GM12878 (cell line): ENCODE measurements at regions of chrX and their contacts with region 1.

Region 1: GRCh38 chrX:103175944-103176753 is 38.8 kb upstream of the BEX4 start:
- DNase-seq: no peak
- ATAC-seq: peak; percentile 81
- H3K4me3 ChIP-seq: no peak overlapping the region
- H3K27ac ChIP-seq: no peak overlapping the region
- H3K4me1 ChIP-seq: no peaks in the 10 kb centered on the region
- H3K27me3 ChIP-seq: no peaks in the 10 kb centered on the region; a peak in 1 of 4 replicates
- CTCF ChIP-seq: peak; percentile 72 to 79 (median 73)
- EP300 ChIP-seq: no peak
- POLR2A ChIP-seq: no peak
- RAD21 ChIP-seq: peak; percentile 66

Region 2: GRCh38 chrX:102129473-102129872 is 1046.7 kb before region 1 on chrX:
- CTCF ChIA-PET with region 1: no interaction called
- POLR2A ChIA-PET with region 1: no interaction called
- RAD21 ChIA-PET with region 1: no interaction called
- SMC1A ChIA-PET with region 1: no interaction called
- in situ Hi-C with region 1: loop called (anchors 25 kb)
- intact Hi-C with region 1: no loop called
- DNase-seq: no peak
- ATAC-seq: no peak
- H3K4me3 ChIP-seq: no peak overlapping the region
- H3K27ac ChIP-seq: no peak overlapping the region
- H3K4me1 ChIP-seq: no peaks in the 10 kb centered on the region
- H3K27me3 ChIP-seq: no peaks in the 10 kb centered on the region
- CTCF ChIP-seq: peak in 2 of 3 experiments; percentile 32 to 36; a peak in 3 of 6 replicates
- EP300 ChIP-seq: no peak
- POLR2A ChIP-seq: no peak
- RAD21 ChIP-seq: peak; percentile 47; the same call in 1 of the 2 replicates

Region 3: GRCh38 chrX:102934624-102935023 is 241.5 kb before region 1 on chrX:
- CTCF ChIA-PET with region 1: interaction called, 16 read pairs
- POLR2A ChIA-PET with region 1: no interaction called
- RAD21 ChIA-PET with region 1: interaction called, 6 read pairs
- SMC1A ChIA-PET with region 1: no interaction called
- in situ Hi-C with region 1: no loop called
- intact Hi-C with region 1: no loop called
- DNase-seq: no peak
- ATAC-seq: peak; percentile 67
- H3K4me3 ChIP-seq: no peak overlapping the region
- H3K27ac ChIP-seq: no peak overlapping the region
- H3K4me1 ChIP-seq: no peaks in the 10 kb centered on the region
- H3K27me3 ChIP-seq: no peaks in the 10 kb centered on the region
- CTCF ChIP-seq: peak; percentile 61 to 90 (median 81)
- EP300 ChIP-seq: no peak
- POLR2A ChIP-seq: no peak
- RAD21 ChIP-seq: peak; percentile 31; the same call in 1 of the 2 replicates